CD4-positive, alpha-beta memory T cell (primary cell): ENCODE measurements at regions of chr13 and their contacts with region 1.

Region 1: GRCh38 chr13:40069173-40070044 is 413.9 kb downstream of the COG6 start:
- DNase-seq: peak; percentile 53 to 71 (median 66)
- H3K4me3 ChIP-seq: no peak overlapping the region
- H3K4me3 Mint-ChIP-seq: peak overlapping the region in 6 of 8 donors; percentile 27 to 67 (median 40)
- H3K27ac ChIP-seq: no peak overlapping the region
- H3K27ac Mint-ChIP-seq: peak overlapping the region in 6 of 7 donors; percentile 6 to 87 (median 72)
- H3K4me1 ChIP-seq: peaks cover 19% of the 10 kb centered on the region
- H3K4me1 Mint-ChIP-seq: peaks cover 11 to 24% (median 16%) of the 10 kb centered on the region in 4 donors
- H3K27me3 ChIP-seq: no peaks in the 10 kb centered on the region
- H3K27me3 Mint-ChIP-seq: no peaks in the 10 kb centered on the region

Region 2: DNA sequence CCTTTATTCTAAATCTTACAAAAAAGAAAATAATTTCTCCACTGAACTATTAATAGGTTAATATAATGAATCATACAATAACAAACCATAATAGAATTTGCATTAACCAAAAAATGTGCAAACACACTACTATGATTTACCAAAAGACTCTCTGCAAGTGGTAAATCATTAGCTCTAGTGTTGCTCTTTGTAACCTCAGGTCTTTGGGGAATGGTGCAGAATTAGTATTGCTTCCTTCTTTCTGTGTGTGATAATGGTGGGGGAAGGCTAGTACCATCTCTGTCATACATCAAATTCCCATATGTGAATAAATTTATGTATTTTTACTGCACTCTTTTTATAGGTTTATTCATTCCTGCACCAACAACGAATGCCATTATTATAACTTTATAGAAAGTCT is 308.9 kb before region 1 on chr13:
- CTCF ChIA-PET with region 1: no interaction called
- POLR2A ChIA-PET with region 1: no interaction called
- intact Hi-C with region 1: no loop called
- DNase-seq: no peak
- H3K4me3 ChIP-seq: no peak overlapping the region
- H3K4me3 Mint-ChIP-seq: no peak overlapping the region
- H3K27ac ChIP-seq: no peak overlapping the region
- H3K27ac Mint-ChIP-seq: no peak overlapping the region
- H3K4me1 ChIP-seq: no peaks in the 10 kb centered on the region
- H3K4me1 Mint-ChIP-seq: no peaks in the 10 kb centered on the region
- H3K27me3 ChIP-seq: no peaks in the 10 kb centered on the region
- H3K27me3 Mint-ChIP-seq: no peaks in the 10 kb centered on the region

Region 3: DNA sequence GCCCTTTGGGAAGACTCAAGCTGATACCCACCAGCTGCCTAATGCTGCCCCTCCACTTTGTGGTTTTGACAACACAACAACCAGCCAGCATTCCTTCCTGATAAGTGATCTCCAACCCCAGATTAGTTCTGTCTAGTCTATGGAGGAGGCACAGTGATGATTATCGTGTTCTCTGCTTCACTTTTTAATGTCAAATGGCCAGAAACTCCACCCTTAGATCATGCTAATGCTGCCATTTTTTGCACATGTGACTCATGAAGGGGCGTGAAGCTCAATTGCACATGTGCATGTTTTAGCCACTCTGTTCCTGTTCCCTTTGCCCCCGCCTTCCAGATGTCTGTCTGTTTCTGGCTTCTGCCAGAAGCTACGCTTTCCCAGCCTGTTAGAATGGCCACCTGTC is 214.2 kb before region 1 on chr13:
- CTCF ChIA-PET with region 1: no interaction called
- POLR2A ChIA-PET with region 1: no interaction called
- intact Hi-C with region 1: no loop called
- DNase-seq: no peak
- H3K4me3 ChIP-seq: no peak overlapping the region
- H3K4me3 Mint-ChIP-seq: no peak overlapping the region
- H3K27ac ChIP-seq: no peak overlapping the region
- H3K27ac Mint-ChIP-seq: no peak overlapping the region
- H3K4me1 ChIP-seq: no peaks in the 10 kb centered on the region
- H3K4me1 Mint-ChIP-seq: no peaks in the 10 kb centered on the region
- H3K27me3 ChIP-seq: no peaks in the 10 kb centered on the region
- H3K27me3 Mint-ChIP-seq: peaks cover 21 to 23% of the 10 kb centered on the region in 2 donors

Region 4: GRCh38 chr13:39942552-39943273 is 126.7 kb before region 1 on chr13:
- CTCF ChIA-PET with region 1: interaction called, 16 read pairs
- POLR2A ChIA-PET with region 1: no interaction called
- intact Hi-C with region 1: loop called (anchors 1 kb)
- DNase-seq: peak; percentile 55 to 67 (median 63)
- H3K4me3 ChIP-seq: no peak overlapping the region
- H3K4me3 Mint-ChIP-seq: peak overlapping the region in 1 of 8 donors; percentile 20
- H3K27ac ChIP-seq: no peak overlapping the region
- H3K27ac Mint-ChIP-seq: peak overlapping the region in 1 of 7 donors; percentile 43
- H3K4me1 ChIP-seq: no peaks in the 10 kb centered on the region
- H3K4me1 Mint-ChIP-seq: peaks cover 3 to 13% (median 6%) of the 10 kb centered on the region in 4 donors
- H3K27me3 ChIP-seq: no peaks in the 10 kb centered on the region
- H3K27me3 Mint-ChIP-seq: peaks cover 0 to 1% of the 10 kb centered on the region in 2 donors

Region 5: GRCh38 chr13:40211589-40211974 is 142.2 kb after region 1 on chr13:
- CTCF ChIA-PET with region 1: interaction called, 23 read pairs
- POLR2A ChIA-PET with region 1: interaction called, 6 read pairs
- intact Hi-C with region 1: loop called (anchors 1 kb)
- DNase-seq: no peak
- H3K4me3 ChIP-seq: no peak overlapping the region
- H3K4me3 Mint-ChIP-seq: no peak overlapping the region
- H3K27ac ChIP-seq: no peak overlapping the region
- H3K27ac Mint-ChIP-seq: peak overlapping the region in 3 of 7 donors; percentile 37 to 63 (median 61)
- H3K4me1 ChIP-seq: peaks cover 31% of the 10 kb centered on the region
- H3K4me1 Mint-ChIP-seq: peaks cover 41 to 55% (median 45%) of the 10 kb centered on the region in 4 donors
- H3K27me3 ChIP-seq: no peaks in the 10 kb centered on the region
- H3K27me3 Mint-ChIP-seq: no peaks in the 10 kb centered on the region

Region 6: DNA sequence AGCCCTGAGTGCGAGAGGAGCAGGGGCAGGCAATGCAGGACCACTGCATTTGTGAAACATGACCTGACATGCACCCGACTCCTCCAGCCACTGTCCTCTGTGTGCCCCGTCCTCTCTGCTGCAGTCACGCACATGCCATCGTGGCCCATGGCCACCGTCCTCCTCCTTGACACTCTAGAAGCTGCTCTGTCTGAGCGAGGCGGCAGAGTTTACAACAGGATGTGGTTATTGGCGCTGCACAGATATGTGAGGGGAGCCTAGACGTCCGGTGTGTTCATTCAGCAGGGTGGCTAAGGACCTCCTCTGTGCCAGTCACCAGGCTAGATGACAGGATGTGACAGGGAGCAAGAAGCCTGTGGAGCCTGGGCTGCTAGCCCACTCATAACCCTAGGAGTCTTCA is 319.2 kb after region 1 on chr13:
- CTCF ChIA-PET with region 1: interaction called, 5 read pairs
- POLR2A ChIA-PET with region 1: interaction called, 4 read pairs
- intact Hi-C with region 1: loop called (anchors 2 kb)
- DNase-seq: peak; percentile 83 to 93 (median 88)
- H3K4me3 ChIP-seq: peak overlapping the region in 1 of 2 donors; percentile 85
- H3K4me3 Mint-ChIP-seq: peak overlapping the region; percentile 83 to 92 (median 90)
- H3K27ac ChIP-seq: peak overlapping the region; percentile 95
- H3K27ac Mint-ChIP-seq: peak overlapping the region; percentile 89 to 100 (median 99)
- H3K4me1 ChIP-seq: peaks cover 34% of the 10 kb centered on the region
- H3K4me1 Mint-ChIP-seq: peaks cover 31 to 58% (median 39%) of the 10 kb centered on the region in 4 donors
- H3K27me3 ChIP-seq: no peaks in the 10 kb centered on the region
- H3K27me3 Mint-ChIP-seq: no peaks in the 10 kb centered on the region